Activated T-helper 1 cell treated with anti-CD3 and anti-CD28 coated beads, Interleukin-12 subunit alpha, Interleukin-12 subunit beta, Interleukin-2, Interleukin-4 antibody, amounts not matched to agents 30 ng/mL and 10 ng/mL and 1 ng/mL, durations not matched to agents 14 hours and 24 hours and 36 hours (primary cell): ENCODE measurements at regions of chr4 and their contacts with region 1.

Region 1: GRCh38 chr4:144174401-144175067 is 34.0 kb upstream of the GYPA start:
- DNase-seq: peak; percentile 19
- H3K4me3 Mint-ChIP-seq: peak overlapping the region; percentile 40
- H3K27ac Mint-ChIP-seq: peak overlapping the region; percentile 70
- H3K4me1 Mint-ChIP-seq: peaks cover 37% of the 10 kb centered on the region
- H3K27me3 Mint-ChIP-seq: peaks cover 4% of the 10 kb centered on the region

Region 2: DNA sequence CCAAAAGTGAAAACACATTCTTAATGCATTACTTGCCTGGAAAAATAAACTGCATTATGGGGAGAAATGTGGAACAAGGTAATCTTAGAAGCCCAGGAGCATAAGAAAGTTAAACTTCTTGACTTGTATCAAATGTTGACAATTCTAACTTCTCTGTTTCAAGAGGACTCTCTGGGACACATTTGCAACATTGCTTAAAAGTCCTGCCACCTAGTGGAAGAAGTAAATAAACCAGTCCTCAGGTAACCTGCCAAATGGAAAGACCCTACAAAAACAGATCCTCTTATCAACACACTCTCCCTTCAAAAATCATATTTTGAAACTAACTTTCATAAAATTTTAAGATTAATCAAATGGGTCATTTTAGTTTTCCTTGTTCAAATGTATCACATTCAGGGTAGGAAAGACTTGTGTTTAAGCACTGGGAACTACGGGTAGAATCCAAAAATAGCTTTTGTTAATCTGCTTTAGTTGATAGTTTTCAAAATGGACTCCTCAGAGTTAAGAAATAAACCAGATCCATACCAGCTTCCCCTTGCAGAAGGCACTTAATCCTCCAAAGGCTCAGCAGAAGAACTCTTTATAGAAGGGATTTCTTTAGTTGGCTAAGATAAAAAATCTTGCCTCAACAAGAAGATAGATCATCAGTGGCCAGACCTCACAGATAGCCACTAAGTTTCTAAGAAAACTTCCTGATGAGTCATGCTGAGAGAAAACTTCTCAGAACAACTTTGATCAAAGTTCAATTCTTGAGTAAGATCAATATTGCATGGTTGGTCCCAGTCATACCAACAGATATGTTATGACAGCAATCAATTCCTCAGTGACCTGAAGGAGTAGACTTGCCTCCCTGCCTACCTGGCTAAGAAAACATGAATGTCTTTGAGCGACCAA is 613.1 kb after region 1 on chr4:
- intact Hi-C with region 1: loop called (anchors 1 kb)
- DNase-seq: no peak
- H3K4me3 Mint-ChIP-seq: no peak overlapping the region
- H3K27ac Mint-ChIP-seq: no peak overlapping the region
- H3K4me1 Mint-ChIP-seq: no peaks in the 10 kb centered on the region
- H3K27me3 Mint-ChIP-seq: no peaks in the 10 kb centered on the region

Region 3: GRCh38 chr4:145097821-145098674 is 923.5 kb after region 1 on chr4 and contains the starts of genes ABCE1 and ANAPC10:
- intact Hi-C with region 1: loop called (anchors 1 kb)
- DNase-seq: peak; percentile 94
- H3K4me3 Mint-ChIP-seq: peak within 1 kb of the TSS; percentile 92
- H3K27ac Mint-ChIP-seq: peak within 1 kb of the TSS; percentile 100
- H3K4me1 Mint-ChIP-seq: peaks cover 27% of the 10 kb centered on the region
- H3K27me3 Mint-ChIP-seq: no peaks in the 10 kb centered on the region
- total RNA-seq, gene ABCE1: 155 and 176 TPM in 2 replicates
- total RNA-seq, gene ANAPC10: 25.4 and 32.1 TPM in 2 replicates

Region 4: GRCh38 chr4:145481164-145481941 is 1306.8 kb after region 1 on chr4 and contains the start of gene SMAD1:
- intact Hi-C with region 1: loop called (anchors 2 kb)
- DNase-seq: peak; percentile 11
- H3K4me3 Mint-ChIP-seq: peak within 1 kb of the TSS; percentile 73
- H3K27ac Mint-ChIP-seq: peak within 1 kb of the TSS; percentile 49
- H3K4me1 Mint-ChIP-seq: peaks cover 6% of the 10 kb centered on the region
- H3K27me3 Mint-ChIP-seq: peaks cover 33% of the 10 kb centered on the region
- total RNA-seq, gene SMAD1: 3.1 and 3.2 TPM in 2 replicates

Region 5: DNA sequence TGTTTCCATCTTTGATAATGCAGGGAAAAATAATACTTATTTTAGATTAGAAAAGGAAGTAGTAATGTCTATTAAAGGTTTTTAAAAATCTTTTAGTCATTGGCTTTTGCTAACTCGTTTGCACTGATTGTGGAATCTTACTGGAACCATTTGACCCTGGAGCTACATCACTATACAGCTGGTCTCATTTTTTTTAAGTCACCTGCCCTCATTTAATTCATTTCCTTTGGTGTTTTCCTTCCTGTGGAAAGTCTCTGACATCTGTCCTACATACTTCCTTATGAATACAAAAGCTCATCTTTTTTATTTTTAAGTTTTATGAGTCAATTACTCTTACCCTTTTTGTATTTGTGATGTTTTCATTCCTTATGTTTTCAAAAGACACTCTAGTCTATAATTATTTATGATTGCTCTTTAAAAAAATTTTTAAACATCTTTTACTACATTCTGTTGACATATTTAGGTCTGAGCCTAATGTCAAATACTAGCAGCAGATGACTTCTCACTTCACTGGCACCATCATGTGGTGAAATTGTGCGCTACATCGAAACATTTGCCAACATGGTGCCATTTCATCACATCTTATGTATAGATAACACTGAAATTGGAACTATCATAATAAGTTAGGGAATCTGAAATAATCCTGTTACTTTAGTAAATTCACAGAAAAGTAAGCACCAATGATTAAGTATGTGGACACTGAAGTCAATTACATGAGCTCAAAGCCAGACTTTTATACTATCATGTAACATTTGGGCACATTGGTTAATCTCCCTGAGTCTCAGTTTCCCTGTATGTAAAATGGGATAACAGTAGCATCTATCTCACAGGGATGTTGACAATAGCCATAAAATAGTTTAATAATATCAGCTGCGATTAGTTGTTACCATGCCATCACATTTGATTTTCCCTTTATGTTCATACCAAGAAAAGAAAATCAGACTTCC is 1435.2 kb after region 1 on chr4:
- intact Hi-C with region 1: loop called (anchors 2 kb)
- DNase-seq: peak; percentile 31
- H3K4me3 Mint-ChIP-seq: no peak overlapping the region
- H3K27ac Mint-ChIP-seq: no peak overlapping the region
- H3K4me1 Mint-ChIP-seq: peaks cover 18% of the 10 kb centered on the region
- H3K27me3 Mint-ChIP-seq: peaks cover 11% of the 10 kb centered on the region